IMR-90 (cell line): ENCODE measurements at regions of chr17 and their contacts with region 1.

Region 1: GRCh38 chr17:27578718-27579085 is 52.3 kb upstream of the LGALS9 start:
- DNase-seq: peak; percentile 68
- ATAC-seq: no peak
- H3K4me3 ChIP-seq: no peak overlapping the region
- H3K27ac ChIP-seq: peak overlapping the region; percentile 100
- H3K4me1 ChIP-seq: peaks cover 48% of the 10 kb centered on the region
- H3K27me3 ChIP-seq: no peaks in the 10 kb centered on the region
- CTCF ChIP-seq: no peak
- POLR2A ChIP-seq: no peak
- RAD21 ChIP-seq: no peak

Region 2: DNA sequence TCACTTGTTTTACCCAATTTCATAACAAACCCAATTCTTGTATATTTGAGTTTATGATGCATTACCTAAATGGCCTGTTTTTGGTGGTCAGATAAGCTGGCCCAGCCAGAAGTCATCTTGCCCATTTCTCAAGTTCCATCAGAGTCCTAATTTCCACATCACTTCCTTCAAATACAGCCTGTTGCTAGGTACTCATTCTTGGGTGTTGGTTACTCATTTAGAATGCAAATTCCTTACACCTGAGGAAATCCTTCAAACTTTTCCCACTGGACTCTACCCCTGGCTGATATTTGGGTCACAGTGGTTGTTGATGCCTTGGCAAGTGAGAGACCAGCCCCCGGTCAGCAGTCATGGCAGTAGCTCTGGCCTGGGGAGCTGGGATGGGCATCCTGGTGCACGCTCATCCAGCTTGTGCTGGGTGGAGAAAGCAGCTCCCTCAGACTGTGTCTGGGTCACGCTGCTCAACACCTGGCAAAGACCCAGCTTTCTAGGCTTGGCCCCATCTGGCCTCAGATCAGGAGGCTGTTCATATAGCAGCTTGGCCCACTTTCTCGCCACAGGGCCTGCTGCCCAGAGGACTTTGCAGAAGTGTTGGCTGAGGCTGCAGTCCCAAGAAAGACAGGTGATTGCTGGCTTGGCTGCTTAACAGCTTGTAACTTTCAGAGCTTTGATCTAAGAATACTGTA is 259.0 kb before region 1 on chr17:
- CTCF ChIA-PET with region 1: no interaction called
- POLR2A ChIA-PET with region 1: no interaction called
- dilution Hi-C with region 1: no loop called
- in situ Hi-C with region 1: no loop called
- intact Hi-C with region 1: no loop called
- DNase-seq: peak; percentile 48
- ATAC-seq: peak; percentile 41
- H3K4me3 ChIP-seq: no peak overlapping the region
- H3K27ac ChIP-seq: no peak overlapping the region
- H3K4me1 ChIP-seq: peaks cover 13% of the 10 kb centered on the region
- H3K27me3 ChIP-seq: no peaks in the 10 kb centered on the region
- CTCF ChIP-seq: no peak
- POLR2A ChIP-seq: no peak
- RAD21 ChIP-seq: no peak

Region 3: DNA sequence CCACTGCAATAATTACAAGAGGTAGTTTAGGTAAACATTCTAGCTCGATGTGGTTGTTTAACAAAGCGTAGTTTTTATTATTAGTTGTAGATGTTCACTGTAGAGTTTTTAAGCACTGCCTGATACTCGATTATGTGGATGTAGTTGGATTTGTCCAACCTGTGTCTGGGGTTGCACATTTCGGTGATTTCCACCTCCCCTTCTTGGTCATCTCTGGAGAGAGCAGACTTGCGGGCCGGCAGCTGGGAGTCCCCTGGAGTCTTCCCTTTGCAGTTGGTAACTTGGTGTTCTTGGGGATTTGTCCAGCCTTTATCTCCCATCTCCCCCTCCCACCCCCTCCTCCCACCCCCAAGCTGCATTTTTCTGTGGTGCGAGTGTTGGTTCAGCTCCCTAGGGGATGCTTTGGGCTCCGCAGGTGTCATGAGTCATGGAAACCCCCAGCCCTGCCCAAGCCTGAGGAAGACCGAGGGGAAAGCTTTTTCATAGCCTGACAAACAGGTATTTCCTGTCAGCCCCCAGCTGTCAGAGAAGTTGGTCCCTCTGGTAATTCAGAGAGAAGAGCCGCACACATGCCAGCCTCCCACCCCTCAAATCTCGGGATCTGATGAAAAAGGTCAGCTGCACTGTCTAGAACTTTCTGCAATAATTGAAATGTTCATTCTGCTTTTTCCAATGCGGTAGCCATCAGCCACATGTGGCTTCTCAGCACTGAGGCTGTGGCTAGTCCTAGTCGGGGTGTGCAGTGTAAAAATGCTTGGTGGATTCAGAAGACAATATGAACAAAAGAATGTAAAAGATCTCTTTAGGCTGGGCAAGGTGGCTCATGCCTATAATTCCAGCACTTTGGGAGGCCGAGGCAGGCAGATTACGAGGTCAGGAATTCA is 72.1 kb before region 1 on chr17:
- CTCF ChIA-PET with region 1: no interaction called
- POLR2A ChIA-PET with region 1: no interaction called
- dilution Hi-C with region 1: no loop called
- in situ Hi-C with region 1: no loop called
- intact Hi-C with region 1: no loop called
- DNase-seq: no peak
- ATAC-seq: no peak
- H3K4me3 ChIP-seq: no peak overlapping the region
- H3K27ac ChIP-seq: no peak overlapping the region
- H3K4me1 ChIP-seq: peaks cover 39% of the 10 kb centered on the region
- H3K27me3 ChIP-seq: no peaks in the 10 kb centered on the region
- CTCF ChIP-seq: no peak
- POLR2A ChIP-seq: no peak
- RAD21 ChIP-seq: no peak

Region 4: GRCh38 chr17:27601069-27601975 is 22.6 kb after region 1 on chr17:
- CTCF ChIA-PET with region 1: interaction called, 10 read pairs
- POLR2A ChIA-PET with region 1: no interaction called
- dilution Hi-C with region 1: no loop called
- in situ Hi-C with region 1: no loop called
- intact Hi-C with region 1: no loop called
- DNase-seq: peak; percentile 83
- ATAC-seq: peak; percentile 65
- H3K4me3 ChIP-seq: no peak overlapping the region
- H3K27ac ChIP-seq: no peak overlapping the region
- H3K4me1 ChIP-seq: peaks cover 2% of the 10 kb centered on the region; the same call in 1 of the 2 replicates
- H3K27me3 ChIP-seq: no peaks in the 10 kb centered on the region
- CTCF ChIP-seq: peak; percentile 97
- POLR2A ChIP-seq: peak; percentile 37; the same call in 1 of the 2 replicates
- RAD21 ChIP-seq: peak; percentile 97

Region 5: DNA sequence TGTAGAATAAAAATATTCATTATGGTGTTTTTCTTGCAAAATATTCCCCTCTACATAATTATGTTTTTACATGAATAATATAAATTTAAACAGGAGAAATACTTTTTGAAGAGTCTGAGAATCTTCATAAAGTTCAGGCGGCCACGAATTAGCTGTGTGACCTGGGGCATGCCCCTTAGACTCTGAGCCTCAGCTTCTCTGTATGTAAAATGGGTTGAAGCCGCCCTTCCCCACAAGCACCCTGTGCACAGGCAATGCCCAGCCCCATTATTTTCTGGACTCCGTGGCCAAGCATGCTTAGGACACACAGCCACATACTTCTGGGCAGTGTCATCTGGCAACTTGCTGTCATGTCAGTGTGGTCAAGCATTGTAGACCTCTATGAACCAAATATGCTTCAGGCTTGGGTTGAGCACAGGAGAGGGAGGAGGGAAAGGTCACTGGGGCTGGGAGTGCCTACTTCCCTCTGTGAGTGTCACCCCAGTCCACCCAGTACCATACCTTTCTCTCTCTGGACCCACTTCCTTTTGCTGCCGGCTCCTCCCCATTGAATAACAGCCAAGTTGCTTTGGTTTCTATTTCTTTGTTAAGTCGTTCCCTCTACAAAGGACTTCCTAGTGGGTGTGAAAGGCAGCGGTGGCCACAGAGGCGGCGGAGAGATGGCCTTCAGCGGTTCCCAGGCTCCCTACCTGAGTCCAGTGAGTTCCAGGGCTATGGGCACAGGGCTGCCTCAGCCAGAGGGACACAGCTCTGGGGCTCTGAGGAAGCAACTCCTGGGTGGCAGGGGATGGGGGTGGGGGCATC is 52.1 kb after region 1 on chr17 and contains the start of gene LGALS9:
- CTCF ChIA-PET with region 1: no interaction called
- POLR2A ChIA-PET with region 1: no interaction called
- dilution Hi-C with region 1: no loop called
- in situ Hi-C with region 1: loop called (anchors 10 kb)
- intact Hi-C with region 1: no loop called
- DNase-seq: peak; percentile 38
- ATAC-seq: peak; percentile 61
- H3K4me3 ChIP-seq: no peak within 1 kb of the TSS
- H3K27ac ChIP-seq: no peak within 1 kb of the TSS
- H3K4me1 ChIP-seq: peaks cover 10% of the 10 kb centered on the region
- H3K27me3 ChIP-seq: no peaks in the 10 kb centered on the region
- CTCF ChIP-seq: no peak
- POLR2A ChIP-seq: no peak
- RAD21 ChIP-seq: no peak
- total RNA-seq, gene LGALS9: 0.54 and 0.83 TPM in 2 replicates